CD4-positive, alpha-beta T cell (primary cell): ENCODE measurements at regions of chr7 and their contacts with region 1.

Region 1: DNA sequence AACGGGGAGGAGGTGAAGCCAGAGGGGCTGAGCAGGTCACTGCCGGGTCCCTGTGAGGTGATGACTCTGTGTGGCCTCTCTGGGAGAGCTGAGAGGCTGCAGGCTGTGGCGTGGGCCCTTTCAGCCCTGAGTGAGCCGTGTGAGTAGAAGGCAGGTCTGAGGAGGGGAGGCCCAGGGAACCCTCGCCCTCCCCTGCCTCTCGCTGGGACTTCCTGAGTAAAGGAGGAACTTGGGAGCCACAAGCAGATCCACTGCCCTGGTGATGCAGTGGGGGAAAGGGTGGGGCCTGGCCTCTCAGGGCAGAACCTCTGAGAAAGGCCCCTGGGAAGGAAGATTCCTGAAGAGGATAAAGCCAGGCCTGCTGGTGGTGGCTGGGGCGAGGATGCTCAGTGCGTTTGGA is 22.8 kb downstream of the EEPD1 start:
- DNase-seq: peak in 2 of 14 experiments; percentile 50 to 61
- ATAC-seq: no peak
- H3K4me3 ChIP-seq: no peak overlapping the region
- H3K4me3 Mint-ChIP-seq: no peak overlapping the region
- H3K27ac ChIP-seq: no peak overlapping the region
- H3K27ac Mint-ChIP-seq: no peak overlapping the region
- H3K4me1 ChIP-seq: no peaks in the 10 kb centered on the region
- H3K4me1 Mint-ChIP-seq: peaks cover 14% of the 10 kb centered on the region
- H3K27me3 ChIP-seq: no peaks in the 10 kb centered on the region
- H3K27me3 Mint-ChIP-seq: no peaks in the 10 kb centered on the region
- CTCF ChIP-seq: no peak

Region 2: GRCh38 chr7:35869810-35870209 is 306.1 kb before region 1 on chr7:
- CTCF ChIA-PET with region 1: no interaction called
- POLR2A ChIA-PET with region 1: no interaction called
- intact Hi-C with region 1: no loop called
- DNase-seq: no peak
- ATAC-seq: no peak
- H3K4me3 ChIP-seq: no peak overlapping the region
- H3K4me3 Mint-ChIP-seq: no peak overlapping the region
- H3K27ac ChIP-seq: no peak overlapping the region
- H3K27ac Mint-ChIP-seq: no peak overlapping the region
- H3K4me1 ChIP-seq: no peaks in the 10 kb centered on the region
- H3K4me1 Mint-ChIP-seq: peaks cover 60% of the 10 kb centered on the region
- H3K27me3 ChIP-seq: no peaks in the 10 kb centered on the region
- H3K27me3 Mint-ChIP-seq: no peaks in the 10 kb centered on the region
- CTCF ChIP-seq: no peak

Region 3: DNA sequence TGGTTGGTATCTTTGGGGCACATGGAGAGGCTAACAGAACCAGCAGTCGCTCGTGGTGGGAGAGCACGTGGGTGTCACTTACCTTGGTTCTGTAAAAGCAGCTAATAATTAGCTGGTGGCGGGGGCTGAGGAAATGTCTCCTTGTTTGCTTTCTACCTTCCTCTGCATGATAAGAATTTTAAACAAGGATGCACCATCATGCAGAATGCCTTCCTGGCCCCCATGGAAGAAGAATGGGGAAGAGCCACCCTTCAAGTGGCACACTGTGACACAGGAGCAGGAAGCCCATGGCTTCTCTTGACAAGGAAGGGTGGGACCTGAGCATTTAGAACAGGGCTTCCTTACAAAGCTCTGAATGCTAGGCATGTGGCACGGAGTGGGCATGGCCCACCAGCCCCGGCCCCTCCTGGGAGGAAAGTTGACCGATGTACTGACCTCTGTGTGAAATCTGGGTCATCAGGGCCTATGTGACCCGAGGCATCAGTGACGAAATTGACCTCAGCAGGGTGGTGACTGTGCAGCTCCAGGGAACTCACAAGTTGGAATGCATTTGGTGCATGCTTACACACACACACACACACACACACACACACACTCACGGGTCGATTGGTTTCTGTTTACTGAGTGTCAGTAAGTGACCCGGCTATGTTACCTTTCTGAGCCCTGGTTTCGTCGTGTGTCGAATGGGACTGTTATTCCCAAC is 96.8 kb after region 1 on chr7:
- CTCF ChIA-PET with region 1: no interaction called
- POLR2A ChIA-PET with region 1: no interaction called
- intact Hi-C with region 1: loop called in 1 of 2 experiments (anchors 5 kb)
- DNase-seq: peak in 1 of 14 experiments; percentile 31
- ATAC-seq: no peak
- H3K4me3 ChIP-seq: no peak overlapping the region
- H3K4me3 Mint-ChIP-seq: no peak overlapping the region
- H3K27ac ChIP-seq: no peak overlapping the region
- H3K27ac Mint-ChIP-seq: no peak overlapping the region
- H3K4me1 ChIP-seq: peaks cover 17% of the 10 kb centered on the region
- H3K4me1 Mint-ChIP-seq: peaks cover 18% of the 10 kb centered on the region
- H3K27me3 ChIP-seq: no peaks in the 10 kb centered on the region
- H3K27me3 Mint-ChIP-seq: no peaks in the 10 kb centered on the region
- CTCF ChIP-seq: no peak